Thyroid gland (tissue), 4 donors: ENCODE measurements at regions of chr2 and their contacts with region 1.

Region 1: GRCh38 chr2:168705534-168706470 is 96.6 kb upstream of the NOSTRIN start:
- DNase-seq: no peak
- H3K4me3 ChIP-seq: no peak overlapping the region
- H3K27ac ChIP-seq: no peak overlapping the region
- H3K4me1 ChIP-seq: peaks cover 0 to 7% of the 10 kb centered on the region in 2 donors
- H3K27me3 ChIP-seq: no peaks in the 10 kb centered on the region
- CTCF ChIP-seq: peak in 4 of 6 experiments; percentile 9 to 47 (median 34)
- POLR2A ChIP-seq: no peak

Region 2: DNA sequence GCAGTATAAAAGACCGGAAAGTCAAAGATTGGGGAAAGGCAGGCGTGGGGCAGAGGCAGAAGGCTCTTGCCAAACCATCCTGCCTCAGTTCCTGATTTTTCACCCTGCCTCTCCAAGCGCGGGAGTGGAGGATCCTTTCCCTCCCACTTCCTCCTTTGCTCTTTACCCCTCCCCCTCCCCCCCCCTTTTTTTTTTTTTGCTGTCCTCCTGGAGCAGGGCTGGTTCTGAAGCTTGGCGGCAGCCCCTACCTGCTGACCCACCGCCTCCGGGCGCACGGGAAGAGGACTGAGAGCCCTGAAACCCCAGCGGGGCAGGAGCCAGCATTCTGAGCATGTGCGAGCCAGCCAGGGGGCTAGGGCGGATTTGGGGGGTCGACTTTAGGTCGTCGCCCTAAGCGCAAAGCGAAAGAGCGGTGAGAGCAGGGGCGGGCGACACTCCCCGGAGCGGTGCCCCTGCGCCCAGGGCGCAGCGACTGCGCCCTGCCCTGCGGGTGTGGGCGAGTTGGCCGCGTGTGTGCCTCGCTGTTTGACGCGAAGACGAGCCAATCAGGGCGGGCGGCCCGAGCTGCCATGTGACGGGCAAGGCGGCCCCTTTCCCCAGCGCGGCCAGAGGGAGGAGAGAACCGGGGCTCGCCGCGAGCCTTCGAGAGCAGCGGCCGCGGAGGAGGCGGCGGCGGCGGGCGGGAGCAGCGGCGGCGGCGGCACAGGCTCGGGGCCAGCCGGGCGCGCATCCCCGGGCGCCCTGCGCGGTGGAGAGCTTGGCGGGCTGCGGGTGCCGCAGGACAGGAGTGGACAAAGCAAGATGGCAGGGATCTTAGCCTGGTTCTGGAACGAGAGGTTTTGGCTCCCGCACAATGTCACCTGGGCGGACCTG is 249.9 kb before region 1 on chr2 and contains the start of gene CERS6:
- intact Hi-C with region 1: loop called (anchors 10 kb)
- DNase-seq: peak; percentile 97 to 98
- H3K4me3 ChIP-seq: peak within 1 kb of the TSS; percentile 74 to 94 (median 86)
- H3K27ac ChIP-seq: peak within 1 kb of the TSS; percentile 32 to 80 (median 79)
- H3K4me1 ChIP-seq: peaks cover 0 to 12% of the 10 kb centered on the region in 2 donors
- H3K27me3 ChIP-seq: no peaks in the 10 kb centered on the region
- CTCF ChIP-seq: no peak
- POLR2A ChIP-seq: peak; percentile 3 to 93
- total RNA-seq, gene CERS6: 35.7 to 60.6 (median 39.2) TPM

Region 3: GRCh38 chr2:168501466-168502065 is 204.2 kb before region 1 on chr2:
- intact Hi-C with region 1: no loop called
- DNase-seq: no peak
- H3K4me3 ChIP-seq: no peak overlapping the region
- H3K27ac ChIP-seq: no peak overlapping the region
- H3K4me1 ChIP-seq: peaks cover 0 to 4% of the 10 kb centered on the region in 2 donors
- H3K27me3 ChIP-seq: no peaks in the 10 kb centered on the region
- CTCF ChIP-seq: no peak
- POLR2A ChIP-seq: no peak